GM12878 (cell line): ENCODE measurements at regions of chrX and their contacts with region 1.

Region 1: GRCh38 chrX:83469551-83469950 is 38.5 kb upstream of the POU3F4 start:
- DNase-seq: no peak
- ATAC-seq: peak; percentile 88
- H3K4me3 ChIP-seq: no peak overlapping the region
- H3K27ac ChIP-seq: no peak overlapping the region
- H3K4me1 ChIP-seq: no peaks in the 10 kb centered on the region
- H3K27me3 ChIP-seq: no peaks in the 10 kb centered on the region
- CTCF ChIP-seq: peak; percentile 42 to 57 (median 50); a peak in 4 of 6 replicates
- EP300 ChIP-seq: no peak
- POLR2A ChIP-seq: no peak
- RAD21 ChIP-seq: peak; percentile 36; the same call in 1 of the 2 replicates

Region 2: DNA sequence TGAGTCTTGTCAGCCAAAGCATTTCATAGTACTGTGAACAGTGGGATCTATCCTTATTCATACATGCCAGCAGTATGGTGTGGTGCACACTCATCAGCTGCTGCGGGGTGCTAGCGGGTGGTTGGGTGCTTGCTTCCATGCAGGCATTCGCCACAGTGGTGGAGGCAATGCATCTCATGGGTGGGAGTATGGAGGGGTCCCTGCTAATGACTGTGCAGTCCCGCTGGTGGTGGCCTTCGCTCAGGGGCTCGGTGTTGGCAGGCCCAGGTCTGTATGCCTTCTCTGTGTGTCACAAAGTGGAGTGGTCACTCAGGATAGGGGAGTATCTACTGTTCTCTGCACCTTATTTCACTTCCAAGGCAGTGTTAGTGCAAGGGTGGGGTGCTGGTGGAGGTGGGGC is 161.1 kb after region 1 on chrX:
- CTCF ChIA-PET with region 1: interaction called, 39 read pairs
- POLR2A ChIA-PET with region 1: no interaction called
- RAD21 ChIA-PET with region 1: interaction called, 18 read pairs
- SMC1A ChIA-PET with region 1: interaction called, 22 read pairs
- in situ Hi-C with region 1: no loop called
- intact Hi-C with region 1: loop called (anchors 1 kb)
- DNase-seq: no peak
- ATAC-seq: no peak
- H3K4me3 ChIP-seq: no peak overlapping the region
- H3K27ac ChIP-seq: no peak overlapping the region
- H3K4me1 ChIP-seq: no peaks in the 10 kb centered on the region
- H3K27me3 ChIP-seq: no peaks in the 10 kb centered on the region
- CTCF ChIP-seq: no peak
- EP300 ChIP-seq: no peak
- POLR2A ChIP-seq: no peak
- RAD21 ChIP-seq: no peak

Region 3: GRCh38 chrX:83759872-83760271 is 290.3 kb after region 1 on chrX:
- CTCF ChIA-PET with region 1: interaction called, 13 read pairs
- POLR2A ChIA-PET with region 1: no interaction called
- RAD21 ChIA-PET with region 1: interaction called, 3 read pairs
- SMC1A ChIA-PET with region 1: no interaction called
- in situ Hi-C with region 1: no loop called
- intact Hi-C with region 1: loop called (anchors 2 kb)
- DNase-seq: no peak
- ATAC-seq: no peak
- H3K4me3 ChIP-seq: no peak overlapping the region
- H3K27ac ChIP-seq: no peak overlapping the region
- H3K4me1 ChIP-seq: no peaks in the 10 kb centered on the region
- H3K27me3 ChIP-seq: no peaks in the 10 kb centered on the region
- CTCF ChIP-seq: peak; percentile 43 to 54 (median 47); a peak in 5 of 6 replicates
- EP300 ChIP-seq: no peak
- POLR2A ChIP-seq: no peak
- RAD21 ChIP-seq: peak; percentile 62

Region 4: GRCh38 chrX:83845397-83845796 is 375.8 kb after region 1 on chrX:
- CTCF ChIA-PET with region 1: interaction called, 3 read pairs
- POLR2A ChIA-PET with region 1: no interaction called
- RAD21 ChIA-PET with region 1: interaction called, 4 read pairs
- SMC1A ChIA-PET with region 1: no interaction called
- in situ Hi-C with region 1: no loop called
- intact Hi-C with region 1: loop called (anchors 5 kb)
- DNase-seq: no peak
- ATAC-seq: peak; percentile 95
- H3K4me3 ChIP-seq: no peak overlapping the region
- H3K27ac ChIP-seq: no peak overlapping the region
- H3K4me1 ChIP-seq: no peaks in the 10 kb centered on the region
- H3K27me3 ChIP-seq: no peaks in the 10 kb centered on the region
- CTCF ChIP-seq: peak; percentile 75 to 84 (median 76)
- EP300 ChIP-seq: no peak
- POLR2A ChIP-seq: no peak
- RAD21 ChIP-seq: peak; percentile 74